ENCODE measurements at regions of chr15 and their contacts with region 1.

Region 1: DNA sequence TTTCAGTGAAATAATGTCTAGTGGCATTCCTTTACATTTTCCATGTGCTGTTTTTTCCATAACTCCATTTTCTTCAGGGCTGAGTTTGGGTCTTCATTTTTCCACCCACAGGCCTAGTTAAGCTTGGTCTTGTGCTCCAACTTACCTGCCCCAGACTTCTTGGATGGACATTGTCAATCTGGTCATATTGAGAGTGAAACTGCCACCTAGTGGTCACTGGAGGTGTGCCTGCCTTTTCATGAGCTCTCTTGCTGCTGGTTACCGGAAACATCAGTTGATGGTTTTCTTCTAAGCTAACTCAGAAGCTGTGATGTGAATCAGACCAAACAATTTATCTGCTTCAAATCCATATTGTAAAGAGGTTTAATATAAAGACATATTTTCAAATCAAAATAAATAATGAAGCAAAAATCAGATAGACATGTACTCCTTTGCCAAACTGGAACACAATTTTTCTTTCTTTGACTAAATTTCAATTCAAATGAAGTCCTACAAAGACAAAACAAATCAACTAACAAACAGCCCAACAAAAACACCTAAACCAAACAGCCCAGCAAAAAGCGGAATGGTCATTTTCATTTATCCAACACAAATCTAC is 135.1 kb upstream of the RASGRP1 start:
- DNase-seq: no peak
- ATAC-seq: peak; percentile 68
- H3K4me3 ChIP-seq: no peak overlapping the region
- H3K27ac ChIP-seq: no peak overlapping the region
- H3K4me1 ChIP-seq: peaks cover 19% of the 10 kb centered on the region
- H3K27me3 ChIP-seq: no peaks in the 10 kb centered on the region
- CTCF ChIP-seq: peak; percentile 85 to 92 (median 87)
- EP300 ChIP-seq: no peak
- POLR2A ChIP-seq: no peak
- RAD21 ChIP-seq: peak; percentile 79

Region 2: DNA sequence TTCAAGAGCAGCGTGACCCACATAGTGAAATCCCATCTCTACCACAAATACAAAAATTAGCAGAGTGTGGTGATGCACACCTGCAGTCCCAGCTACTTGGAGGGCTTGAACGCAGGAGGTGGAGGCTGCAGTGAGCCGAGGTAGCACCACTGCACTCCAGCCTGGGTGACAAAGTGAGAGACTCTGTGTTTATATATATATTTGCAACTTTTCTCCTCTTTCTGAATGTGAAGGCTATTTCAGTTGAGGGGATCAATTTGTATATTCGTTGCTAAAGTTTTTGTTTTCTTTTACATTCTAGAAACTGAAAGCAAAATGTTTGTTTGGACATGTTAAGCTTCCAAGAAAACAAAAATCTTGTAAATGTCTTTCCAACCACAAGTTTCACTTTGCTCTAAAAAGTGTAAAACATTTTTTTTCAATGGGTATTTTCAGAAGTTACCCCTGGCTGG is 275.6 kb before region 1 on chr15:
- CTCF ChIA-PET with region 1: interaction called, 20 read pairs
- POLR2A ChIA-PET with region 1: no interaction called
- RAD21 ChIA-PET with region 1: no interaction called
- SMC1A ChIA-PET with region 1: interaction called, 6 read pairs
- in situ Hi-C with region 1: no loop called
- intact Hi-C with region 1: no loop called
- DNase-seq: peak; percentile 48
- ATAC-seq: peak; percentile 79
- H3K4me3 ChIP-seq: peak overlapping the region; percentile 7; the same call in 1 of the 2 replicates
- H3K27ac ChIP-seq: no peak overlapping the region
- H3K4me1 ChIP-seq: peaks cover 5% of the 10 kb centered on the region; the same call in 1 of the 2 replicates
- H3K27me3 ChIP-seq: no peaks in the 10 kb centered on the region
- CTCF ChIP-seq: no peak
- EP300 ChIP-seq: no peak
- POLR2A ChIP-seq: no peak
- RAD21 ChIP-seq: no peak

Region 3: GRCh38 chr15:38474155-38474757 is 225.5 kb before region 1 on chr15:
- CTCF ChIA-PET with region 1: interaction called, 141 read pairs
- POLR2A ChIA-PET with region 1: no interaction called
- RAD21 ChIA-PET with region 1: interaction called, 46 read pairs
- SMC1A ChIA-PET with region 1: interaction called, 138 read pairs
- in situ Hi-C with region 1: no loop called
- intact Hi-C with region 1: loop called (anchors 1 kb)
- DNase-seq: peak; percentile 33
- ATAC-seq: peak; percentile 99
- H3K4me3 ChIP-seq: no peak overlapping the region
- H3K27ac ChIP-seq: no peak overlapping the region
- H3K4me1 ChIP-seq: no peaks in the 10 kb centered on the region
- H3K27me3 ChIP-seq: no peaks in the 10 kb centered on the region
- CTCF ChIP-seq: peak; percentile 67 to 92 (median 74); a peak in 5 of 6 replicates
- EP300 ChIP-seq: no peak
- POLR2A ChIP-seq: no peak
- RAD21 ChIP-seq: peak; percentile 84

Region 4: GRCh38 chr15:38496151-38496550 is 203.6 kb before region 1 on chr15:
- CTCF ChIA-PET with region 1: interaction called, 11 read pairs
- POLR2A ChIA-PET with region 1: interaction called, 4 read pairs
- RAD21 ChIA-PET with region 1: interaction called, 3 read pairs
- SMC1A ChIA-PET with region 1: interaction called, 19 read pairs
- in situ Hi-C with region 1: no loop called
- intact Hi-C with region 1: no loop called
- DNase-seq: no peak
- ATAC-seq: no peak
- H3K4me3 ChIP-seq: no peak overlapping the region
- H3K27ac ChIP-seq: no peak overlapping the region
- H3K4me1 ChIP-seq: no peaks in the 10 kb centered on the region
- H3K27me3 ChIP-seq: no peaks in the 10 kb centered on the region
- CTCF ChIP-seq: no peak
- EP300 ChIP-seq: no peak
- POLR2A ChIP-seq: no peak
- RAD21 ChIP-seq: no peak

Region 5: DNA sequence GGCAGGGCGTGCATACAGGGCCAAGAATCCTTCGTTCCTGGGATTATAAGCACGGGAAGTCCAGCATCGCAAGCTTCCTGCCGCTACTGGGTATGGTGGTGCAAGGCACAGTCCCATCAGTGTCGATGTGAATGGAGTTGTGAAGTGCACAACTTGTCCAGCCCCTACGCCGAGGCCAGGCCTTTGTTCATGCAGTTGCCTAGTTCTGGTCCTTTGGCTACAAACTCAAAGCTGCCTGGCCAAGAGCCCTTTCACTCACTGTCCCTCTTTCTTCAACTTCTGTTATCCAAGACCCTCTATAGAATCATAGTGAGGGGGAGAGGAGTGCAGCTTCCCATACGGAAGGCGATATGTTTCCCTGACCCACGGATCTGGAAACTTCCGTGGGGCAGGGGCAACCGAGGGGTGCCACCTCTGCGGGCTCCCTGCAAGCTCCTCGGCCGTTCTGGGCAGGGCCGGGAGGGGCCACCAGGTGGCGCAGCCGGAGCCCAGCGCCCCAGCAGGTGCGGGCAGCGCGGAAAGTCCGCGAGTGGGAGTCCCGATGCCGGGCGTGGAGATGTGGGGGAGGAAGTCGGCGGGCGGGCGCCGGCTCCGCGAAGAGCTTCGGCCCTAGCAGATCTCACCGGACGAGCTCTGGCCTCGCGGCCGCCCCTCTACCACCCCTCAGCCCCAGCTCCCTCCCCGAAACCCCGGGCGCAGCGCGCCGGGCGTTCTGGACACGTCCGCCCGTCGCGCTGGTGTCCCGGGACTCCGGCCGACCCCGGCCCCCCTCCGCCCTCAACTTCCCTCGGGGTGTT is 135.8 kb before region 1 on chr15:
- CTCF ChIA-PET with region 1: interaction called, 276 read pairs
- POLR2A ChIA-PET with region 1: interaction called, 4 read pairs
- RAD21 ChIA-PET with region 1: interaction called, 5 read pairs
- SMC1A ChIA-PET with region 1: interaction called, 293 read pairs
- in situ Hi-C with region 1: no loop called
- intact Hi-C with region 1: no loop called
- DNase-seq: no peak
- ATAC-seq: peak; percentile 77
- H3K4me3 ChIP-seq: peak overlapping the region; percentile 75
- H3K27ac ChIP-seq: peak overlapping the region; percentile 72
- H3K4me1 ChIP-seq: peaks cover 37% of the 10 kb centered on the region
- H3K27me3 ChIP-seq: no peaks in the 10 kb centered on the region
- CTCF ChIP-seq: peak; percentile 88 to 95 (median 94)
- EP300 ChIP-seq: no peak
- POLR2A ChIP-seq: no peak; the same call in 1 of the 2 replicates
- RAD21 ChIP-seq: peak; percentile 75

Region 6: DNA sequence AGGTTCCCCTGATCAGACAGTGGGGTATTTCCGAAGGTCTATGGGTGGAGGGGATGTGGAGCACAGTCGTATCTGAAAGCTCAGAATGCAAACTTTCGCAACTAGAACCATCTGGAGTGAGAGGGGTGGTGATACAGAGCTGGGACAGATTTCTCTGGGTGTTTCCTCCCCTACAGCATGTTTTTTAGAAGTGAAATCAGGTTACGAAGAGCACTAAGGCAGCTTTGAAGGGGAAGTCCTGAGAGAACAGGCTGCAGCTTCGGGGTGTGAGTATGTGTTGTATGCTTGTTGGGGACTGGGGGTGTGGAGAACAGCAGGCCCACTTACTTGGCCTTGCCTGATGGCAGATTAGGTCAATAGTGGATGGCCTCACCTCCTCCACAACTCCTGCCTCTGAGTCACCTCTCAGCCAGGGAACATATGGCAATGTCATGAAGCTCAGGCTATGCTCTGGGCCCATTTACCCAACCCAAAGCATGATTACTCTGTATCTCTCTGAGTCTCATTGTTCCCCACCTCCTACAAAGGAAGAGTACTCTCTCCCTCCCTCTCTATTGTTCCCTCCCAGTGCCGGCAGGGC is 28.0 kb before region 1 on chr15:
- CTCF ChIA-PET with region 1: interaction called, 26 read pairs
- POLR2A ChIA-PET with region 1: no interaction called
- RAD21 ChIA-PET with region 1: interaction called, 23 read pairs
- SMC1A ChIA-PET with region 1: interaction called, 7 read pairs
- in situ Hi-C with region 1: no loop called
- intact Hi-C with region 1: no loop called
- DNase-seq: peak; percentile 91
- ATAC-seq: peak; percentile 76
- H3K4me3 ChIP-seq: no peak overlapping the region
- H3K27ac ChIP-seq: peak overlapping the region; percentile 77
- H3K4me1 ChIP-seq: peaks cover 56% of the 10 kb centered on the region
- H3K27me3 ChIP-seq: no peaks in the 10 kb centered on the region
- CTCF ChIP-seq: no peak
- EP300 ChIP-seq: peak in 1 of 2 experiments; percentile 7; a peak in 2 of 4 replicates
- POLR2A ChIP-seq: peak; percentile 61
- RAD21 ChIP-seq: no peak; the same call in 1 of the 2 replicates

Region 7: DNA sequence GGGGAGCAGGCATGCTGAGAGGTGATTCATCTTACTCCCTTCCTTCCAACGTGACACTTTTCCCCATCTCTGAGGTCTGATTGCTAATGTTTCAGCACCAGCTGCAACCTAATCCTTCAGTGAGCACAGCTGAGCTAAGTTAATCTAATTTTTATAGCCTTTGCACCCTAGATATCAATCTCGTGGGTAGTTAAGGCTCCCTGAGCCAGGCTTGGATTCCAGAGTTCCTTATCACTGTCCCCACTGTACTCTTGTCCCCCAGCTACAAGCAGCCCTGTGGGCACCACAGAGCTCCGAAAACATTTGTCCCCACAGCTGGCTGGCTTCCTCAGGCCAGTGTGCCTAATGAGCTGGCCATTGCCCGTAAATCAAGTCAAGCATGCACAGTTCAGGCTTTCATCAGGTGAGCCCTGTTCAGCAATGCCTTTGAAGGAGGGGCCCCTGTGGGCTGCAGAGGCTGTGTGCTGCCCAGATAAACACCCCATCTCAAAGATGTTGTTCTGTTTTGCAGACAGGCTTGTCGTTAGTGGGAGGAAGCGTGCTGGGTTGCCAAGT is 241.7 kb after region 1 on chr15:
- CTCF ChIA-PET with region 1: no interaction called
- POLR2A ChIA-PET with region 1: no interaction called
- RAD21 ChIA-PET with region 1: no interaction called
- SMC1A ChIA-PET with region 1: no interaction called
- in situ Hi-C with region 1: no loop called
- intact Hi-C with region 1: no loop called
- DNase-seq: no peak
- ATAC-seq: no peak
- H3K4me3 ChIP-seq: no peak overlapping the region
- H3K27ac ChIP-seq: no peak overlapping the region
- H3K4me1 ChIP-seq: no peaks in the 10 kb centered on the region
- H3K27me3 ChIP-seq: no peaks in the 10 kb centered on the region; a peak in 2 of 4 replicates
- CTCF ChIP-seq: no peak
- EP300 ChIP-seq: no peak
- POLR2A ChIP-seq: no peak
- RAD21 ChIP-seq: no peak

Measured in GM12878 (cell line).